ENCODE measurements at regions of chr3 and their contacts with region 1.

Region 1: DNA sequence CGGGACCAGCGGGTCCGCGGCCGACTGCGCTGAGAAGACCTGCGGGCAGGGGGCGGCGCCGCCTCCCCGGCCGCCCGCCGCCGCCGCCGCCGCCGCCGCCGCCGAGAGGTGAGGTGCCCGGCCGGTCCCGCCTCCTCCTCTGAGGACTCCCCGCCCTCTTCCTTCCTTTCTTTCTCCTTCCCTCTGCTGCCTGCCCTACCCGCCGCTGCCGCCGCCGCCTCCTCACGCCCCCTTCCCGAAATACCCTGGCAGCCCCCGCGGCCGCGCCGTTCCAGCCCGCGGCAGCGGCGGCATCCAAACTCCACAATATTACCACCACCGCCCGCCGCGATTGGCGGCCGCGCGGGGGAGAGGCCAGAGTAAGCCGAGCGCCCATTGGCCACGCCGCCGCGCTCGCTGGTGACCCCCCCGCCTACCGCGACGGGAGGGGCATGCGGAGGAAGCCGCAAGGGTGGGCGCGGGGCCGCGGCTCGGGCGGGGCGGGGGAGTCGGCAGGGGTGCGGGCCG is 61.8 kb upstream of the ANKRD28 start:
- DNase-seq: peak; percentile 81 to 83
- ATAC-seq: peak; percentile 94 to 97 (median 96)
- H3K4me3 ChIP-seq: peak overlapping the region; percentile 73 to 99 (median 90)
- H3K27ac ChIP-seq: peak overlapping the region in 9 of 10 donors; percentile 64 to 84 (median 77)
- H3K4me1 ChIP-seq: peaks cover 0 to 24% (median 15%) of the 10 kb centered on the region in 9 donors
- H3K27me3 ChIP-seq: no peaks in the 10 kb centered on the region
- CTCF ChIP-seq: no peak

Region 2: DNA sequence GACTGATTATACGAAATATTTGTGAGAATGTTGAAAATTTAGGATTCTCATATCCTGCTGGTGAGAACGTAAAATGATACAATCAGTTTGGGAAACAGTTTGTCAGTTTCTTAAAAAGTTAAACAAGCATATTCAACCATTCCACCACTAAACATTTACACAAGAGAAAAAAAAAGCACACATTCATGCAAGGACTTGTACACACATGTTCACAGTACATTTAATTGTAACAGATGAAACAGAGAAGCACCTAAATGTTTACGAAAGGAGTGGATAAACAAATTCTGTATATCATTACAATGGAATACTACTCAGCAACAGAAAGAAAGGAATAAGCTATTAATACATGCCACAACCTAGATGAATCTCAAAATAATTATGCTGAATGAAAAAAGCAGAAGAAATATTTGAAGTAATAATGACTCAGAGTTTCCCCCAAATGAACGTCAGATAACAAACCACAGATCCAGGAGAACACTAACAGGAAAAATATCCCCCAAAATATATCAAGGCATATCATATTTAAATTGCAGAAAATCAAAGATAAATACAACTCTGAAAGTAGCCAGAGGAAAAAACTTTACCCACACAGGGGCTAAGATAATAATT is 76.1 kb before region 1 on chr3:
- intact Hi-C with region 1: no loop called
- DNase-seq: no peak
- ATAC-seq: no peak
- H3K4me3 ChIP-seq: no peak overlapping the region
- H3K27ac ChIP-seq: peak overlapping the region in 1 of 10 donors; percentile 12
- H3K4me1 ChIP-seq: peaks cover 0 to 22% (median 10%) of the 10 kb centered on the region in 9 donors
- H3K27me3 ChIP-seq: no peaks in the 10 kb centered on the region
- CTCF ChIP-seq: no peak

Region 3: DNA sequence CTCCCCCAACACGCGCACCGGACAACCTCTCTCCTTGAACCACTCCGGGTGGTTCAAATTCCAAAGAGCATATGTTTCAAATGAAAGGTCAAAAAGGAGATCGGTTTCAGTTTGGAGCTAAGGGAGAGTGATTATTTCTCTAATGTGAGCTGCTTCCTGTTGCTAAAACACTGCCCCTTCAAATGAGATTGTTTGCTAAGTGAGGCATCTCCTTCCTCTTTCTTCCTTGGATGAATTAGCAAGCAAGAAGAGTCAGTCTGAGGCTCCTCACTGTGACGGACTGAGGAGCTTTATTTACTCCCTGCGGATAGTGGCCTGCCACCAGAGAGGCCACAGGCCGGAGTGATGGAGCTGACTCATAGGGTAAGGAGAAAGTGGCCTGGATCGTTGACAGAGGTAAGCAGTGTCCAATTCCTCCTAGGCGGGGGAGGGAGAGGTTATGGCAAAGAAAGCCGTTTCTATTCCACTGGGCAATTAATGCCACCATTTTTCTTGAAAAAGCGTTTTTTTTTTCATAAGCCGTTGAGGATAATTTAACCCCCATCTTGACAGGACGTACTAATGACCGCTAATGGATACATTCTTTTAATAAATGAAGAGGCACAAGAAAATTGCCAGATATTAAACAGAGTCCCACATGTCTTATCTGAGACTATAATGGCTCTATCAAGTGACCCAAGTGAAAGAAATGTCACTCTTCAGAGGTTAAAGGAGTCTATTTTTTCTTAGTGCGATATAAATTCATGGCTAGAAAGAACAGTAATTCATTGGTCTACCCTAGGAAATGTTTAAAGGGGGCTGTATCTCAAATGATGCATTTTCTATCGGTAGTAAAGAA is 105.3 kb after region 1 on chr3:
- intact Hi-C with region 1: loop called in 1 of 10 experiments (anchors 10 kb)
- DNase-seq: no peak
- ATAC-seq: peak in 5 of 8 donors; percentile 35 to 63 (median 37)
- H3K4me3 ChIP-seq: peak overlapping the region in 2 of 10 donors; percentile 0 to 23
- H3K27ac ChIP-seq: peak overlapping the region in 7 of 10 donors; percentile 10 to 76 (median 27)
- H3K4me1 ChIP-seq: peaks cover 0 to 12% (median 10%) of the 10 kb centered on the region in 9 donors
- H3K27me3 ChIP-seq: no peaks in the 10 kb centered on the region
- CTCF ChIP-seq: no peak

Region 4: GRCh38 chr3:15982667-15983145 is 123.1 kb after region 1 on chr3:
- intact Hi-C with region 1: loop called in 1 of 10 experiments (anchors 10 kb)
- DNase-seq: peak in 1 of 2 donors; percentile 24
- ATAC-seq: peak; percentile 25 to 93 (median 90)
- H3K4me3 ChIP-seq: peak overlapping the region in 6 of 10 donors; percentile 14 to 38 (median 24)
- H3K27ac ChIP-seq: peak overlapping the region in 8 of 10 donors; percentile 3 to 71 (median 36)
- H3K4me1 ChIP-seq: peaks cover 0 to 6% (median 0%) of the 10 kb centered on the region in 9 donors
- H3K27me3 ChIP-seq: no peaks in the 10 kb centered on the region
- CTCF ChIP-seq: no peak